MCF 10A (cell line): ENCODE measurements at regions of chr22 and their contacts with region 1.

Region 1: DNA sequence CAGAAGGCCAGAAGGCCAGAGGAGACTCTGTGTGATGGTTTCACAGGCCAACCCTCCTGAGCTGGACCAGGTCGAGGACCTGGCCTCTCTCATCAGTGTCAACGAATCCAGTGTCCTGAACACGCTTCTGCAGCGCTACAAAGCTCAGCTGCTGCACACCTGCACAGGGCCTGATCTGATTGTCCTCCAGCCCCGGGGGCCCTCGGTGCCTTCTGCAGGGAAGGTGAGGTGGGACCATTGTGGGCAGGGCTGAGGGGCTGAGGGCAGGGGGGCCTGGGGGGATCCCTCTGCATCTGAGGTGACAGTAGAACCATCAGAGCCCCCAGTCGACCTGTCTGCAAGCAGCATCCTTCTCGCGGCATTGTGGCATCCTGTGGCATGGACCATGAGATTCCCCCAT is 30.3 kb downstream of the MYO18B start:
- DNase-seq: no peak
- H3K4me3 Mint-ChIP-seq: no peak overlapping the region
- H3K27ac Mint-ChIP-seq: no peak overlapping the region
- H3K4me1 Mint-ChIP-seq: no peaks in the 10 kb centered on the region
- H3K27me3 Mint-ChIP-seq: no peaks in the 10 kb centered on the region
- CTCF ChIP-seq: no peak

Region 2: DNA sequence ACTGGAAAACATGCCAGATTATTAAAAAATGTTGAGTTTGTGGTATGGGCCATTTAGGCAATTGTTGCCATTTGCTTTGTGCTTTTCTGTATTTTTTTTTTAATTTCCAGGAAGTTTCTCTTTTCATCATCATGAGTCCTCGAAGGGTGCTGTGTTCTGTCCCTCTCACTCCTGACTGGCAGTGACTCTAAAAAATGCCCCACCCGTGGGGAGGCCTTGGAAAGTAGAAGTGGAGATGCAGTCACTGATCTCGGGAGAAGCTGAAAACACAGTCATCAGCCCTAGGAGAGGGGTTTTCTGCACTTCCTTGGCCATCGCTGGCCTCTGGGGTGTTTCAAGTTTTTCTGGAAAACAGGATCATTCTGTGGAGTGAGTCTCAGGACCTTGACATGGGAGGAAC is 306.3 kb before region 1 on chr22:
- CTCF ChIA-PET with region 1: interaction called, 51 read pairs
- POLR2A ChIA-PET with region 1: no interaction called
- intact Hi-C with region 1: loop called (anchors 1 kb)
- DNase-seq: no peak
- H3K4me3 Mint-ChIP-seq: no peak overlapping the region
- H3K27ac Mint-ChIP-seq: peak overlapping the region; percentile 31
- H3K4me1 Mint-ChIP-seq: no peaks in the 10 kb centered on the region
- H3K27me3 Mint-ChIP-seq: no peaks in the 10 kb centered on the region
- CTCF ChIP-seq: no peak

Region 3: GRCh38 chr22:25564320-25564978 is 207.8 kb before region 1 on chr22 and contains the start of gene GRK3:
- CTCF ChIA-PET with region 1: interaction called, 27 read pairs
- POLR2A ChIA-PET with region 1: no interaction called
- intact Hi-C with region 1: loop called (anchors 1 kb)
- DNase-seq: peak; percentile 75
- H3K4me3 Mint-ChIP-seq: peak within 1 kb of the TSS; percentile 77
- H3K27ac Mint-ChIP-seq: peak within 1 kb of the TSS; percentile 3
- H3K4me1 Mint-ChIP-seq: peaks cover 5% of the 10 kb centered on the region
- H3K27me3 Mint-ChIP-seq: no peaks in the 10 kb centered on the region
- CTCF ChIP-seq: no peak
- total RNA-seq, gene GRK3: 6.5 and 7.9 TPM in 2 replicates

Region 4: GRCh38 chr22:25702040-25702439 is 70.2 kb before region 1 on chr22:
- CTCF ChIA-PET with region 1: interaction called, 15 read pairs
- POLR2A ChIA-PET with region 1: no interaction called
- intact Hi-C with region 1: loop called (anchors 1 kb)
- DNase-seq: peak; percentile 16
- H3K4me3 Mint-ChIP-seq: no peak overlapping the region
- H3K27ac Mint-ChIP-seq: no peak overlapping the region
- H3K4me1 Mint-ChIP-seq: no peaks in the 10 kb centered on the region
- H3K27me3 Mint-ChIP-seq: no peaks in the 10 kb centered on the region
- CTCF ChIP-seq: peak; percentile 55

Region 5: GRCh38 chr22:25747245-25747944 is 24.9 kb before region 1 on chr22:
- CTCF ChIA-PET with region 1: interaction called, 10 read pairs
- POLR2A ChIA-PET with region 1: interaction called, 3 read pairs
- intact Hi-C with region 1: no loop called
- DNase-seq: peak; percentile 99
- H3K4me3 Mint-ChIP-seq: peak overlapping the region; percentile 40
- H3K27ac Mint-ChIP-seq: peak overlapping the region; percentile 76
- H3K4me1 Mint-ChIP-seq: peaks cover 43% of the 10 kb centered on the region
- H3K27me3 Mint-ChIP-seq: no peaks in the 10 kb centered on the region
- CTCF ChIP-seq: no peak

Region 6: GRCh38 chr22:25754527-25755202 is 17.6 kb before region 1 on chr22:
- CTCF ChIA-PET with region 1: interaction called, 10 read pairs
- POLR2A ChIA-PET with region 1: interaction called, 3 read pairs
- intact Hi-C with region 1: no loop called
- DNase-seq: peak; percentile 11
- H3K4me3 Mint-ChIP-seq: no peak overlapping the region
- H3K27ac Mint-ChIP-seq: no peak overlapping the region
- H3K4me1 Mint-ChIP-seq: peaks cover 30% of the 10 kb centered on the region
- H3K27me3 Mint-ChIP-seq: no peaks in the 10 kb centered on the region
- CTCF ChIP-seq: no peak

Region 7: DNA sequence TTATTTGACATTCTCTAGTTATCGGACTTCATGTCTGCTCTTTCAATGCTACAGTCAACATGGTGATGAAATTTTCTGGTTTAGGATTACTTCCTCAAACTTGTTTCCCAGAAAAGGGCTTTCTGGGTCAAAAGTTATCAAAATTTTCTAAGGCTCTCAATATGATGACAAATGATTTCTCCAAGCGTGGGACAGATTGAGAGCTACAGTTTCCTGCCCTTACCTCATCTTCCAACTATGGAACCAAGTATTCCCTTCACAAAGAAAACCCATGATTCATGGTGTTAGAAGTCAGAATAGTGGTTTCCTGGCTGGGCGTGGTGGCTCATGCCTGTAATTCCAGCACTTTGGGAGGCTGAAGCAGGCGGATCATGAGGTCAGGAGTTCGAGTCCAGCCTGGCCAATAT is 12.5 kb before region 1 on chr22:
- CTCF ChIA-PET with region 1: interaction called, 15 read pairs
- POLR2A ChIA-PET with region 1: interaction called, 3 read pairs
- intact Hi-C with region 1: no loop called
- DNase-seq: peak; percentile 87
- H3K4me3 Mint-ChIP-seq: no peak overlapping the region
- H3K27ac Mint-ChIP-seq: peak overlapping the region; percentile 75
- H3K4me1 Mint-ChIP-seq: peaks cover 27% of the 10 kb centered on the region
- H3K27me3 Mint-ChIP-seq: no peaks in the 10 kb centered on the region
- CTCF ChIP-seq: no peak